ENCODE measurements at regions of chr1 and their contacts with region 1.

Region 1: DNA sequence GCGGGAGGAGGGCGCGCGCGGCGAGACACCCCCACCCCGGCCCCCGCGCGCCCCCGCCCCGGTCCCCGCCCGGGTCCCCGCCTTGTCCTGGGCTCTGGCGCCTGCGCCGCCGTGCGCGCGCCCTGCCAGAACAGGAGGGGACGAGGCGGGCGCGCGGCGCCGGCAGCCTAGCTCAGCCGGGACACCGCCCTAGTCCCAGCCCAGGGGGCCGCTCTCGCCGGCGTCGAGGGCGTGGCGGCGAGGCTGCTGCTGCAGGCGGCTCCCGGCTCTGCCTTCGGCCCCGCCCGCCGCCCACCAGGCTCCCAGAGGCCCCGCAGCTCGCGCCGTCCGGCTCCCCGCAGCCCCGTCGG is at the start of gene RCAN3:
- DNase-seq: peak; percentile 92
- ATAC-seq: peak; percentile 81
- H3K4me3 Mint-ChIP-seq: peak within 1 kb of the TSS; percentile 97
- H3K27ac Mint-ChIP-seq: peak within 1 kb of the TSS; percentile 98
- H3K4me1 Mint-ChIP-seq: peaks cover 58% of the 10 kb centered on the region
- H3K27me3 Mint-ChIP-seq: no peaks in the 10 kb centered on the region
- CTCF ChIP-seq: no peak
- total RNA-seq, gene RCAN3: 55.3 to 56.8 TPM

Region 2: DNA sequence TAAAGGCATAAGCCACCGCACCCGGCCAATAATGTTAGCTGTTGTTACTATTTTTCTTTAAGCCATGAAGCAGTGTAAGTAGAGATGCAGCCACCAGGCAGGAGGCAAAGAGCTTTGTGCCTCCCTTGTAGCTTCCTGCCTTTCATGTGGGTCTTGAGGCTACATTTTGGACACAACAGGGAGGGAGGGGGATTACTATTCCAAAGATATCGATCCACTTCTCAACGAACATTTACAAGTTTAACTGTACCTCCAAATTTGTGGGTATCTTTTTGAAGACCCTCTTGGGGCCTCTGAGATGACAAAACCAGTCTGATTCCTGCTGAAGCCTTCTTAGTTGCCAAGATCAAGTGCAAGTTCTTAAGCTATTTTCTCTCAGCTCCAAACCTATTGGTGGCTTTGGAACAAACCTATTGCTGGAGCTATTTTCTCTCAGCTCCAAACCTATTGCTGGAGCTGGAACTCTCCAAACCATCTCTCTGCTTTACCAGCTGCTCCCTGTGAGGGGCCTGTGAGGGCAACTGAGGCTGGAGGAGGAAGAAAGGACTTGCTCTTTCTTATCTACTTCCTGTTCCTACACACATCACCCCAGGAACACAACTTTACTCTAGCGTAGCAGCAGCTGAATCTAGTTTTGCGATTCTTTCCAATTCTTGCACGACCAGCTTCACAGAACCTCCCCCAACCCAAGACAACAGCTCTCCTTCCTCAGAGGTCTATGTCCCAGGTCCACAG is 16.2 kb before region 1 on chr1:
- CTCF ChIA-PET with region 1: interaction called, 30 read pairs
- POLR2A ChIA-PET with region 1: interaction called, 47 read pairs
- intact Hi-C with region 1: no loop called
- DNase-seq: no peak
- ATAC-seq: peak; percentile 24
- H3K4me3 Mint-ChIP-seq: peak overlapping the region; percentile 70
- H3K27ac Mint-ChIP-seq: peak overlapping the region; percentile 93
- H3K4me1 Mint-ChIP-seq: peaks cover 76% of the 10 kb centered on the region
- H3K27me3 Mint-ChIP-seq: no peaks in the 10 kb centered on the region
- CTCF ChIP-seq: no peak

Region 3: GRCh38 chr1:24513706-24514105 is 11.0 kb after region 1 on chr1:
- CTCF ChIA-PET with region 1: interaction called, 32 read pairs
- POLR2A ChIA-PET with region 1: interaction called, 9 read pairs
- intact Hi-C with region 1: no loop called
- DNase-seq: no peak
- ATAC-seq: no peak
- H3K4me3 Mint-ChIP-seq: no peak overlapping the region
- H3K27ac Mint-ChIP-seq: peak overlapping the region; percentile 0
- H3K4me1 Mint-ChIP-seq: peaks cover 61% of the 10 kb centered on the region
- H3K27me3 Mint-ChIP-seq: no peaks in the 10 kb centered on the region
- CTCF ChIP-seq: no peak

Region 4: GRCh38 chr1:24536391-24536840 is 33.7 kb after region 1 on chr1:
- CTCF ChIA-PET with region 1: interaction called, 7 read pairs
- POLR2A ChIA-PET with region 1: interaction called, 12 read pairs
- intact Hi-C with region 1: loop called (anchors 5 kb)
- DNase-seq: peak; percentile 84
- ATAC-seq: peak; percentile 61
- H3K4me3 Mint-ChIP-seq: peak overlapping the region; percentile 72
- H3K27ac Mint-ChIP-seq: peak overlapping the region; percentile 98
- H3K4me1 Mint-ChIP-seq: peaks cover 71% of the 10 kb centered on the region
- H3K27me3 Mint-ChIP-seq: no peaks in the 10 kb centered on the region
- CTCF ChIP-seq: no peak